ENCODE measurements at regions of chr17 and their contacts with region 1.

Region 1: DNA sequence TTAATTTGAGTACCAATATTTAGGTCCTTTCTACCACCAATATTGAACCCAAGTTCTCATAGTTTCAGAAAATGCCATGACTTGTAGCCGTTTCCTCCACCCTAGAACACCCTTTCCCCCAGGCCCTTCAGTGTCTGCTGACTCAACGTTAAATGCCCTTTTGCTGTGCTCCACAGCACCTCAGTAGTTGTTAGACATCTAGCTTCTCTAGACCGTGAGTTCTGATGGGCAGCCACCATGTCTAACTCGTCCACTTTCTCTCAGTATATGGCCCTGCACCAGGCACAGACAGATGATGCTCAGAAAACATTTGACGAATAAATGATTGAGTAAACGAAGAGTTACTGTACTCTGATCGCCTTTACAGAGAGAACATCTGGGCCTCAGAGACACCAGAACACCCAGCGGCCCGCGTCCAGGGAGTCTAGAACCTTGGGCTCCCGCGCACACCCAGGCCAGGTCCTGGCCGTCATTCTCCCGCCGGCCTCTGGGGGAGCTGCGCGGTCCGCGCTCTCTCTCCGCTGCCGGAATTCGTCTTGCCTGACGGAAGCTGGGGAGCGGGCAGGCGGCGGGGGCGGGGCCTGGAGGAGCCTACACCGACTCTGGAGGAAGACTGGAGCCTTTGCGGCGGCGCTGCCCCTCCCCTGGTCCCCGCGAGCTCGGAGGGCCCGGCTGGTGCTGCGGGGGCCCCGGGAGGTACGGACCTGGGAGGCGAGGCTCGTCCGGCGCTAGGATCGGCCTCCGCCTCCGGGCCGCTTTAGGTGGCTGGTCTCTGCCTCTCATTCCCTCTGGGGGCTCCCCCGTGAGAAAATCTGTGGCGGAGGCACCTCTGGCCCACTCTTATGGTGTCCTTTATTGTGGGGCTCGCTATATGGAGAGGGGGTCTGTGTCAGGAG is at the start of gene NKIRAS2:
- DNase-seq: peak; percentile 82 to 94 (median 94)
- ATAC-seq: peak; percentile 80
- H3K4me3 ChIP-seq: peak within 1 kb of the TSS; percentile 69 to 83
- H3K4me3 Mint-ChIP-seq: peak within 1 kb of the TSS; percentile 97
- H3K27ac ChIP-seq: peak within 1 kb of the TSS; percentile 34 to 76
- H3K27ac Mint-ChIP-seq: peak within 1 kb of the TSS; percentile 87
- H3K4me1 ChIP-seq: peaks cover 48% of the 10 kb centered on the region
- H3K4me1 Mint-ChIP-seq: peaks cover 62% of the 10 kb centered on the region
- H3K27me3 ChIP-seq: no peaks in the 10 kb centered on the region
- H3K27me3 Mint-ChIP-seq: no peaks in the 10 kb centered on the region
- CTCF ChIP-seq: peak; percentile 91
- total RNA-seq, gene NKIRAS2: 13.2 to 14.8 TPM

Region 2: DNA sequence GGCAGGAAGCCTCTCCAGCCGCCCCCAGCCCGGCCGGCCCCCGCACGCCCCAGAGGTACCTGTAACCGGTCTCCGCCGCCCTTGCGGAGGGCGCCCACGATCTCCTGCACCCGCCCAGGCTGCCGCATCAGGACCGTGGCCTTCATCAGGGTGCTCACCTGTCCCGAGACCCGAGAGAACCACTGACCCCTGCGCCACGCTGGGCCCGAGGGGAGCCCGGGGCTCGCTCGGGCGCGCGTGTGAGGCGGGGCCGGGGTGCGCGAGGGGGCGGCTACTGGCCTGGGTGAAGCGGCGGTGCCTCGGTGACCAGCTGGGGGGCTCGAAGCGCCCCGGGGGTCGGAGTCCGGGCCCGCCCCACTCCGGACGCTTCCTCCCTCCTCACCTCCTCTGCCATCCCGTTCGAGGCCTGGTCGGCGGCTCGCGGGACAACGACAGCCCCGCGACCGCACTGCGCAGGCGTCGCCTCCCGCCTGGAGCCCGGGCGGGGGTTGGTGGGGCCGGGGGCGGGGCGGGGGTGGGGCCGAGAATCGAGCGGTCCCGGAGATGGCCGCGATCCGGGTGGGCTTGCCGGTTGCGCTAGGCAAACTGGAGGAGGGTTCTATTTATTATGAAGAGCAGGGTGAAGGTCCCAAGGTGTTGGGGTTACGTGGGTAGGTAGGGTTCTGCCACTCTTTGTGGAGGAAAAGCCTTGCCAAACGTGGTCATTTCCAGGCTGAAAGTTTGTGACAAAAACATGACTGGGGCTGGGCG is 183.8 kb before region 1 on chr17 and contains the start of gene NT5C3B:
- CTCF ChIA-PET with region 1: no interaction called
- POLR2A ChIA-PET with region 1: no interaction called
- intact Hi-C with region 1: no loop called
- DNase-seq: peak in 8 of 9 experiments; percentile 43 to 79 (median 58)
- ATAC-seq: peak; percentile 82
- H3K4me3 ChIP-seq: peak within 1 kb of the TSS; percentile 65 to 82
- H3K4me3 Mint-ChIP-seq: peak within 1 kb of the TSS; percentile 88
- H3K27ac ChIP-seq: peak within 1 kb of the TSS in 1 of 2 experiments; percentile 56
- H3K27ac Mint-ChIP-seq: peak within 1 kb of the TSS; percentile 37
- H3K4me1 ChIP-seq: peaks cover 13% of the 10 kb centered on the region
- H3K4me1 Mint-ChIP-seq: peaks cover 16% of the 10 kb centered on the region
- H3K27me3 ChIP-seq: no peaks in the 10 kb centered on the region
- H3K27me3 Mint-ChIP-seq: no peaks in the 10 kb centered on the region
- CTCF ChIP-seq: no peak
- total RNA-seq, gene NT5C3B: 26.5 to 27.0 TPM

Region 3: DNA sequence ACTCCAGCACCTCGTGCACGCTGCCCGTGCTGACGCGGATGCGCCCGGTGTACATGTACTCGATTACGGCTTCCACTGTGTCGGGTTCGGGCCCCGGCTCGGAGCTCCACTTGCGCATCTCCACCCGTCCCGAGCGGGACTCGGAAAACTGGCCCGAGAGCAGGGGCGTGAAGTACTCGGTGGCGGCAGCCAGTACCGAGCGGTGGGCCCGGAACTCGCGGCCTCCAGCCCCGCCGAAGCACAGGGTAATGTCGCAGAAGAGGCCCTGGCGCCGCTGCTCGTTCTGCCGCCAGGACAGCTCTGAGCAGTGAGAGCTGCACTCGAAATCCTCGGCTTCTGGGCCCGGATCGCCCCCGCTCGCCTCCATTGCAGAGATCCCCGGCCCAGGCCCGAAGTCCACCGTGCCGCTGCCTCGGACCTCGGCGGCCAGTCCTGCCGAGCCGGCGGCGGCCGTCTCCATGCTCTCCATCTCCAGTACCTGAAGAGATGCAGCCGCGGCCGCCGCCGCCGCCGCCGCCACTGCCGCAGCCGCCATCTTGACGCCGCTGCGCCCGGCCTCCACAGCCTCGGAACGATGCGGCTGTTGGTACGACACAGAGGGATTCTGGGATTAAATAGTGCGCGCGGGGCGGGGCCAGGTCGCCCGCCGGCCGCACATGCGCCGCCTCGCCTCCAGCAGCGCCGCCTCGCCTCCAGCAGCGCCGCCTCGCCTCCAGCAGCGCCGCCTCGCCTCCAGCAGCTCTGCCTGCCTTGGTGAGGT is 154.7 kb before region 1 on chr17 and contains the start of gene KLHL11:
- CTCF ChIA-PET with region 1: no interaction called
- POLR2A ChIA-PET with region 1: no interaction called
- intact Hi-C with region 1: loop called in 1 of 2 experiments (anchors 2 kb)
- DNase-seq: peak; percentile 72 to 94 (median 87)
- ATAC-seq: peak; percentile 91
- H3K4me3 ChIP-seq: peak within 1 kb of the TSS; percentile 92 to 99
- H3K4me3 Mint-ChIP-seq: no peak within 1 kb of the TSS
- H3K27ac ChIP-seq: peak within 1 kb of the TSS; percentile 85 to 93
- H3K27ac Mint-ChIP-seq: no peak within 1 kb of the TSS
- H3K4me1 ChIP-seq: peaks cover 32% of the 10 kb centered on the region
- H3K4me1 Mint-ChIP-seq: peaks cover 22% of the 10 kb centered on the region
- H3K27me3 ChIP-seq: no peaks in the 10 kb centered on the region
- H3K27me3 Mint-ChIP-seq: no peaks in the 10 kb centered on the region
- CTCF ChIP-seq: no peak
- total RNA-seq, gene KLHL11: 38.4 to 38.9 TPM

Region 4: GRCh38 chr17:41966463-41967140 is 53.2 kb before region 1 on chr17 and contains the start of gene CNP:
- CTCF ChIA-PET with region 1: interaction called, 76 read pairs
- POLR2A ChIA-PET with region 1: interaction called, 50 read pairs
- intact Hi-C with region 1: loop called (anchors 1 kb)
- DNase-seq: peak; percentile 77 to 95 (median 92)
- ATAC-seq: peak; percentile 88
- H3K4me3 ChIP-seq: peak within 1 kb of the TSS; percentile 75 to 89
- H3K4me3 Mint-ChIP-seq: peak within 1 kb of the TSS; percentile 83
- H3K27ac ChIP-seq: peak within 1 kb of the TSS; percentile 75 to 79
- H3K27ac Mint-ChIP-seq: peak within 1 kb of the TSS; percentile 94
- H3K4me1 ChIP-seq: peaks cover 33% of the 10 kb centered on the region
- H3K4me1 Mint-ChIP-seq: peaks cover 44% of the 10 kb centered on the region
- H3K27me3 ChIP-seq: no peaks in the 10 kb centered on the region
- H3K27me3 Mint-ChIP-seq: no peaks in the 10 kb centered on the region
- CTCF ChIP-seq: no peak
- total RNA-seq, gene CNP: 16.7 to 18.8 TPM

Region 5: GRCh38 chr17:42101513-42102319 is 82.0 kb after region 1 on chr17:
- CTCF ChIA-PET with region 1: interaction called, 19 read pairs
- POLR2A ChIA-PET with region 1: interaction called, 3 read pairs
- intact Hi-C with region 1: no loop called
- DNase-seq: peak in 8 of 9 experiments; percentile 47 to 73 (median 66)
- ATAC-seq: peak; percentile 52
- H3K4me3 ChIP-seq: no peak overlapping the region
- H3K4me3 Mint-ChIP-seq: no peak overlapping the region
- H3K27ac ChIP-seq: no peak overlapping the region
- H3K27ac Mint-ChIP-seq: no peak overlapping the region
- H3K4me1 ChIP-seq: peaks cover 9% of the 10 kb centered on the region
- H3K4me1 Mint-ChIP-seq: peaks cover 8% of the 10 kb centered on the region
- H3K27me3 ChIP-seq: no peaks in the 10 kb centered on the region
- H3K27me3 Mint-ChIP-seq: peaks cover 5% of the 10 kb centered on the region
- CTCF ChIP-seq: peak; percentile 76

Region 6: GRCh38 chr17:42153919-42154742 is 134.4 kb after region 1 on chr17:
- CTCF ChIA-PET with region 1: interaction called, 4 read pairs
- POLR2A ChIA-PET with region 1: interaction called, 3 read pairs
- intact Hi-C with region 1: loop called (anchors 1 kb)
- DNase-seq: peak in 2 of 9 experiments; percentile 20 to 40
- ATAC-seq: no peak
- H3K4me3 ChIP-seq: peak overlapping the region; percentile 94 to 95
- H3K4me3 Mint-ChIP-seq: peak overlapping the region; percentile 98
- H3K27ac ChIP-seq: peak overlapping the region; percentile 78 to 87
- H3K27ac Mint-ChIP-seq: peak overlapping the region; percentile 95
- H3K4me1 ChIP-seq: peaks cover 24% of the 10 kb centered on the region
- H3K4me1 Mint-ChIP-seq: peaks cover 39% of the 10 kb centered on the region
- H3K27me3 ChIP-seq: no peaks in the 10 kb centered on the region
- H3K27me3 Mint-ChIP-seq: no peaks in the 10 kb centered on the region
- CTCF ChIP-seq: no peak

Region 7: DNA sequence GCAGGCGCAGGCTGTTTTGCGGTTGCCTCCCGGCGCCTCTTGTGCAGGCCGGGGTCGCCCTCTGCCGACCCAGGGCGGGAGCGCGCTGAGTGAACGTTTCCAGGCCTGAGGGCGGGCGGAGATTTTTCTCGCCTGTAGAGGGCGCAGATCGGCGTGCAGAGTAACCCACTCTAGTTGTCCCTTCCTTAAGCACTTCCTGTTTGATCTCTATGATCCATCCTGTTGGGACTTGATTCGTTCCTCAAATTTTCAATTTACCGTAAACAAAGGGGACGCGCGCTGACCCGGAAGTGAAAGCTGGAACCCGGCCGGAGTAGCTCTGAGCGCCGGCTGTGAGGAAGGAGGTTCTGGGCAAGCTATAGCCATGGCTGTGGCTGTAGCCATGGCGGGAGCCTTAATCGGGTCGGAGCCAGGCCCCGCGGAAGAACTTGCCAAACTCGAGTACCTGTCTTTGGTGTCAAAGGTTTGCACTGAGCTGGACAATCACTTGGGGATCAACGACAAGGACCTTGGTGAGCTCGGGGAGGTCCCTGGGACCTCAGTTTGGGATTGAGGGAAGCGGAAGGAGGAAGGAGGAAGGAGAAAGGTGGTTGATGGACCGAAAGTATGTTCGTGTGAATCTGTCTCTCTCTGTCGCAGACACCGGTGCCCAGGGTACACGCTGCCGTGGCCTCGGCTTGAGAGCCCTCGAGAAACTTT is 1464.1 kb after region 1 on chr17 and contains the start of gene DHX8:
- CTCF ChIA-PET with region 1: no interaction called
- POLR2A ChIA-PET with region 1: no interaction called
- intact Hi-C with region 1: loop called in 1 of 2 experiments (anchors 5 kb)
- DNase-seq: peak; percentile 97 to 100 (median 99)
- ATAC-seq: peak; percentile 98
- H3K4me3 ChIP-seq: peak within 1 kb of the TSS; percentile 94 to 99
- H3K4me3 Mint-ChIP-seq: peak within 1 kb of the TSS; percentile 100
- H3K27ac ChIP-seq: peak within 1 kb of the TSS; percentile 87 to 91
- H3K27ac Mint-ChIP-seq: peak within 1 kb of the TSS; percentile 99
- H3K4me1 ChIP-seq: peaks cover 27% of the 10 kb centered on the region
- H3K4me1 Mint-ChIP-seq: peaks cover 37% of the 10 kb centered on the region
- H3K27me3 ChIP-seq: no peaks in the 10 kb centered on the region
- H3K27me3 Mint-ChIP-seq: no peaks in the 10 kb centered on the region
- CTCF ChIP-seq: peak; percentile 100
- total RNA-seq, gene DHX8: 125 to 130 TPM

Measured in CD8-positive, alpha-beta T cell (primary cell).